ENCODE measurements at regions of chr20 and their contacts with region 1.

Region 1: DNA sequence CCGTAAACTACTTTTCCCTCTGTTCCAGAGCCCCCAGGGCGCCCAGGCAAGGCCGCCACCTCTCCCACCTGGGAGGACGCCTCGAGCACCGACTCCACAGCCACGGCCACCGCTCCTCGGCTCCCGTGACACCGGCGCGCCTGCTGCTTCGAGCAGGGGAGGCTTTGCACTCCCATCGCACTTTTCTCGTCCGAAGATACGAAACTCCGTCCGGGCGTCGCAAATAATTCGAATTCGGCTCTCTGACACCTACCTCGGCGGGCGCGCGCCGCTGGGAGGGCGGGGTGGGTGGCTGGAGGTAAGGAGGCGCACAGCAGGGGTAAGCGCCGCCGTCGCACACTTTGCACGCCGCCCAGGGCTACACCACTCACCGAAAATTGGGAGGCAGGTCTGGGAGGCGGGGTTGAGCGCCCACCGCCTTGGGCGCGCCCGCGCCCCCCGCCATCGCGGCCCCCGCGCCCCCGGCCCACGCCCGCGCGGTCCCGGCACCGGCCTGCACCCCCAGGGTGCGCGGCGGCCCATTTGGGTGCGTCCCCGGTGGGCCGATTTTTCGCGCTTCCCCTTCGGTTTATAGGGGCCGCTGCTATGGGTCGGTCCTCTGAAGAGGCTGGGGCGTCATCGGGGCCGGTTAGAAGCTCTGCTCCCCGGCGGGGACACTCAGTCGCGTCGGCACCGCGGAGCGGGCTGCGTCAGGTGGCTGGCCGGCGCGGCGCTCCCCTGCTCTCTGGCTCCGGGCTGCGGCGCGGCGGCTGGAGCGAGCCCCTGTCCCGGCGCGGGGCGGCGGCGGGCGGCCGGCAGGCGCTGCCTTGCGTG is 36.2 kb downstream of the GNAS start:
- DNase-seq: peak; percentile 73 to 91 (median 84)
- H3K4me3 ChIP-seq: peak overlapping the region; percentile 72
- H3K4me3 Mint-ChIP-seq: peak overlapping the region; percentile 76 to 89 (median 82)
- H3K27ac ChIP-seq: peak overlapping the region; percentile 87
- H3K27ac Mint-ChIP-seq: peak overlapping the region; percentile 24 to 95 (median 88)
- H3K4me1 ChIP-seq: peaks cover 19% of the 10 kb centered on the region
- H3K4me1 Mint-ChIP-seq: peaks cover 20 to 47% (median 26%) of the 10 kb centered on the region in 3 donors
- H3K27me3 ChIP-seq: no peaks in the 10 kb centered on the region
- H3K27me3 Mint-ChIP-seq: peaks cover 0 to 5% of the 10 kb centered on the region in 2 donors

Region 2: DNA sequence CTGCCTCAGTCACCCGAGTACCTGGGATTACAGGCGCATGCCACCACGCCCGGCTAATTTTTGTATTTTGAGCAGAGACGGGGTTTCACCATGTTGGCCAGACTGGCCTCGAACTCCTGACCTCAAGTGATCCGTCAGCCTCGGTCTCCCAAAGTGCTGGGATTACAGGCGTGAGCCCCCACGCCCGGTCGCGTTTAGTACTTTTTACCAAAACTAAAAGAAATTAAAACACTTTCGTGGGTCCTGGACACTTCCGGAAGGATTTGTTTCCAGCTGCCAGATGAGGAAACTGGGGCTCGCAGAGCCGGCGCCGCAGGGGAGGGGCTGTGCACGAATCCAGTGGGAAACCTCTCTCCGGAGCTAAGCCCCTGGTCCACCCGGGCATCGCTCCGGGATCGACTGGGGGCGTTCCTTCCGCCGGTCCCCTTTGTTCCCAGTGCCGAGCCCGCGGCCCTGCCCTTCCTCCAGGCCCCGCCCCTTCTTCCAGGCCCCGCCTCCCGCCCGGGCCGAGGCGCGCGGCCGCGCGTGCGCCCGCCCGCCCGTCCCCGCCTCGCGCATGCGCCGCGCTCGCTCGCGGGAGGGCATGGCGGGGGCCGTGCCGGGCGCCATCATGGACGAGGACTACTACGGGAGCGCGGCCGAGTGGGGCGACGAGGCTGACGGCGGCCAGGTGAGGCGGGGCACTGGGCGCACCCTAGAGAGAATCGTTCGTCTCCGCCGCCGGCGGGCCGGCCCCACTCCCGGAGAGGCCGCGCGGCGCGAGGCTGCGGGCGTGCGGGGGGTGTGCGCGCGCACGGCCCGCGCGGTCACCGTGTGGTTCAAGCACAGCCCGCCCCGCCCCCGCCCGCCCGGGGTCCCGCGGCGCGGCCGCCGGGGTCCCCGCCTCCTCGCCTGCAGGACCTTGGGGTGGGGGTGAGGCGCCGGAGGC is 92.2 kb after region 1 on chr20 and contains the start of gene NELFCD:
- CTCF ChIA-PET with region 1: interaction called, 3 read pairs
- POLR2A ChIA-PET with region 1: interaction called, 13 read pairs
- DNase-seq: peak; percentile 85 to 90 (median 87)
- H3K4me3 ChIP-seq: peak within 1 kb of the TSS; percentile 83
- H3K4me3 Mint-ChIP-seq: peak within 1 kb of the TSS; percentile 85 to 97 (median 95)
- H3K27ac ChIP-seq: peak within 1 kb of the TSS; percentile 70
- H3K27ac Mint-ChIP-seq: peak within 1 kb of the TSS; percentile 87 to 95 (median 92)
- H3K4me1 ChIP-seq: peaks cover 30% of the 10 kb centered on the region
- H3K4me1 Mint-ChIP-seq: peaks cover 34 to 40% (median 38%) of the 10 kb centered on the region in 3 donors
- H3K27me3 ChIP-seq: no peaks in the 10 kb centered on the region
- H3K27me3 Mint-ChIP-seq: peaks cover 0 to 10% of the 10 kb centered on the region in 2 donors
- total RNA-seq, gene NELFCD: 101 to 108 TPM